Heart right ventricle (tissue), 16 donors: ENCODE measurements at regions of chr11 and their contacts with region 1.

Region 1: DNA sequence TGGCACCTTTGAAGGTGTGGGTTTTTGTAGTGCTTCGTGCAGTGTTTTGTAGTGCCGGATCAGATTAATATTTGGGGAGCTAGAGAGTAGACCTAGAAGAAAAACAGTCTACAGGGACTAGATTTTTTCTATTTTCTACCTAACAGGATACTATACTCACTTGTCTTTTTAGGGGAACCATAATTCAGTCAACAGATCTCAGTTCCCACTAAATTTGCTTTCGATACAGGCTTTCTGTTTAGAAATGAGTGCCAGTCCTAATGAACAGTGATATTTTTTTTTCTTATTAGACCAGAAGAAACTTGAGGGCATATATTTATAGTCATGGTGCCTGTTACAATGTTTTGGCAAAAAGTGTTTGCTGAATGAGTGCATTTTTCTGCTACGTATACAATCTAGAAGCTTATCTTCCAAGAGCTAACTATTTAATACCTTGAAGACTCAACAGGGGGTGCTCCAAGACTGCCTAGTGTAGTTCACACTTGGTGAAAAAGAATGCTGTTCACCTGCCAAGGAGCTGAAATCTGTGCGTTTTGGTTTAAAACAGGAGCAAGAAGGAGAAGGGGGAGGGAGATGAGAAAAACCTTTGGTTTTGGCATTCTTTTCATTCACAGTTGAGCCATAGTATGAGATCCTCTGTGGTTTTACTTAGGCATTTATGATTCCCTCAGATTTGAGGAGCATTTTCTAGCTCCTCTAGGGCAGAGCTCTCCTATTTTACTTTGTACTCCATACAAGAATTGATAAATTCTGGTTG is 44.9 kb upstream of the VSTM5 start:
- DNase-seq: peak in 1 of 2 donors; percentile 30
- ATAC-seq: peak in 5 of 8 donors; percentile 39 to 73 (median 49)
- H3K4me3 ChIP-seq: no peak overlapping the region
- H3K27ac ChIP-seq: no peak overlapping the region
- H3K4me1 ChIP-seq: peaks cover 0 to 3% (median 0%) of the 10 kb centered on the region in 9 donors
- H3K27me3 ChIP-seq: peaks cover 0 to 30% (median 12%) of the 10 kb centered on the region in 7 donors
- CTCF ChIP-seq: peak; percentile 50 to 78 (median 64)

Region 2: GRCh38 chr11:94417386-94417987 is 522.2 kb after region 1 on chr11:
- intact Hi-C with region 1: loop called in 6 of 10 experiments (anchors 2 to 10 kb)
- DNase-seq: no peak
- ATAC-seq: peak in 2 of 8 donors; percentile 47 to 50
- H3K4me3 ChIP-seq: no peak overlapping the region
- H3K27ac ChIP-seq: no peak overlapping the region
- H3K4me1 ChIP-seq: no peaks in the 10 kb centered on the region
- H3K27me3 ChIP-seq: no peaks in the 10 kb centered on the region
- CTCF ChIP-seq: peak; percentile 13 to 70 (median 58)

Region 3: GRCh38 chr11:94493281-94494125 is 598.2 kb after region 1 on chr11 and contains the starts of genes ANKRD49 and MRE11:
- intact Hi-C with region 1: loop called in 1 of 10 experiments (anchors 10 kb)
- DNase-seq: peak; percentile 94 to 96
- ATAC-seq: peak; percentile 100
- H3K4me3 ChIP-seq: peak within 1 kb of the TSS; percentile 55 to 95 (median 88)
- H3K27ac ChIP-seq: peak within 1 kb of the TSS; percentile 15 to 92 (median 74)
- H3K4me1 ChIP-seq: peaks cover 0 to 33% (median 21%) of the 10 kb centered on the region in 9 donors
- H3K27me3 ChIP-seq: no peaks in the 10 kb centered on the region
- CTCF ChIP-seq: no peak
- total RNA-seq, gene ANKRD49: 1.9 to 8.0 (median 4.7) TPM
- total RNA-seq, gene MRE11: 6.4 to 11.2 (median 8.2) TPM

Region 4: DNA sequence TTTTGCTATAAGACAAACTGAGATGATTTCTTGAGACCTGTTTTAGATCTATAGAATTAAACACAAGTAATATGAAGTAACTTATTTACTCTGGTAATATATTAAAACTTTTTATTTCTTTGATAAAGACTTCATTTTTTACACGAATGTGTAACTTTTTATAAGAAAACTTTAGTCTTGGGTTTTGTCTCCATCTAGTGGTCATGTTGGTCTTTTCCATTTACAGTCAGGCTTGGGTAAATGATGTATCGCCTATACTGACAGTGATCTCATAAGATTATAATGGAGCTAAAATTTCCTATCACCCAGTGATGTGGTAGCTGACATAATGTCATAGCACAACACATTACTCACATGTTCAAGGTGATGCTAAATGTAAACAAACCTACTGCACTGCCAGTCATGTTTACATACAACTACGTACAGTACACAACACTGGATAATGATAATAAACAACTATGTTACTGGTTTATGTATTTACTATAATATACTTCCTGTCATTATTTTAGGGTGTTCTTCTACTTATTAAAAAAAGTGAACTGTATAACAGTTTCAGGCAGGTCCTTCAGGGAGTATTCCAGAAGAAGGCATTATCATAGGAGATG is 609.5 kb after region 1 on chr11:
- intact Hi-C with region 1: loop called in 6 of 10 experiments (anchors 2 to 10 kb)
- DNase-seq: no peak
- ATAC-seq: no peak
- H3K4me3 ChIP-seq: no peak overlapping the region
- H3K27ac ChIP-seq: no peak overlapping the region
- H3K4me1 ChIP-seq: no peaks in the 10 kb centered on the region
- H3K27me3 ChIP-seq: no peaks in the 10 kb centered on the region
- CTCF ChIP-seq: peak; percentile 40 to 81 (median 76)

Region 5: GRCh38 chr11:94973099-94973968 is 1078.0 kb after region 1 on chr11 and contains the starts of genes CWC15 and KDM4D:
- intact Hi-C with region 1: no loop called
- DNase-seq: peak; percentile 94 to 96
- ATAC-seq: peak; percentile 100
- H3K4me3 ChIP-seq: peak within 1 kb of the TSS; percentile 67 to 97 (median 84)
- H3K27ac ChIP-seq: peak within 1 kb of the TSS in 9 of 10 donors; percentile 56 to 88 (median 81)
- H3K4me1 ChIP-seq: peaks cover 2 to 26% (median 15%) of the 10 kb centered on the region in 9 donors
- H3K27me3 ChIP-seq: no peaks in the 10 kb centered on the region
- CTCF ChIP-seq: no peak
- total RNA-seq, gene CWC15: 53.1 to 75.4 (median 67.3) TPM
- total RNA-seq, gene KDM4D: 0.79 to 1.3 (median 1.0) TPM